Heart right ventricle (tissue), 16 donors: ENCODE measurements at regions of chr14 and their contacts with region 1.

Region 1: DNA sequence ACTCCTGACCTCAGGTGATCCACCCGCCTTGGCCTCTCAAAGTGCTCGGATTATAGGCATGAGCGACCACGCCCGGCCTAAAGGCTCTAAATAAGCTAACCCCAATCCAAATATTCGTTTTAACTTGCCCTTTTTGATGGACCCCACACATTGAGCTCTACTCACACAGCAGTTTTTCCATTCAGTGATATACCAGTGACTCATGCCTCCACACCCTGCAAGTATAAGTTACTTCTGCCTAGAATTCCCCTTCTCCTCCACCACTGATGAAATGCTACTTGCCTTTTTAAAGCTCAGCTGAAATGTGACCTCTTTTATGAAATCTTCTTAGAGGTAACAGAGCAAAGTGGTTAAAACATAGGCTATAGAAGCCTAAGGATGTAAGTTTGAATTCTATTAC is 68.8 kb downstream of the EXOC5 start:
- DNase-seq: no peak
- ATAC-seq: no peak
- H3K4me3 ChIP-seq: no peak overlapping the region
- H3K27ac ChIP-seq: no peak overlapping the region
- H3K4me1 ChIP-seq: no peaks in the 10 kb centered on the region
- H3K27me3 ChIP-seq: peaks cover 0 to 9% (median 0%) of the 10 kb centered on the region in 7 donors
- CTCF ChIP-seq: no peak

Region 2: GRCh38 chr14:56491299-56492285 is 708.3 kb before region 1 on chr14:
- intact Hi-C with region 1: loop called in 2 of 10 experiments (anchors 5 kb)
- DNase-seq: peak in 1 of 2 donors; percentile 25
- ATAC-seq: peak in 6 of 8 donors; percentile 35 to 57 (median 44)
- H3K4me3 ChIP-seq: no peak overlapping the region
- H3K27ac ChIP-seq: no peak overlapping the region
- H3K4me1 ChIP-seq: peaks cover 0 to 12% (median 0%) of the 10 kb centered on the region in 9 donors
- H3K27me3 ChIP-seq: no peaks in the 10 kb centered on the region
- CTCF ChIP-seq: peak; percentile 42 to 77 (median 71)

Region 3: GRCh38 chr14:56498112-56498511 is 701.8 kb before region 1 on chr14:
- intact Hi-C with region 1: loop called in 2 of 10 experiments (anchors 5 kb)
- DNase-seq: no peak
- ATAC-seq: no peak
- H3K4me3 ChIP-seq: no peak overlapping the region
- H3K27ac ChIP-seq: no peak overlapping the region
- H3K4me1 ChIP-seq: no peaks in the 10 kb centered on the region
- H3K27me3 ChIP-seq: no peaks in the 10 kb centered on the region
- CTCF ChIP-seq: no peak

Region 4: GRCh38 chr14:56686416-56686815 is 513.5 kb before region 1 on chr14:
- intact Hi-C with region 1: loop called in 2 of 10 experiments (anchors 5 to 10 kb)
- DNase-seq: peak; percentile 29 to 40
- ATAC-seq: peak; percentile 44 to 97 (median 75)
- H3K4me3 ChIP-seq: no peak overlapping the region
- H3K27ac ChIP-seq: no peak overlapping the region
- H3K4me1 ChIP-seq: peaks cover 0 to 5% (median 0%) of the 10 kb centered on the region in 9 donors
- H3K27me3 ChIP-seq: peaks cover 0 to under 1% (median 0%) of the 10 kb centered on the region in 7 donors
- CTCF ChIP-seq: peak in 7 of 9 donors; percentile 16 to 47 (median 26)

Region 5: DNA sequence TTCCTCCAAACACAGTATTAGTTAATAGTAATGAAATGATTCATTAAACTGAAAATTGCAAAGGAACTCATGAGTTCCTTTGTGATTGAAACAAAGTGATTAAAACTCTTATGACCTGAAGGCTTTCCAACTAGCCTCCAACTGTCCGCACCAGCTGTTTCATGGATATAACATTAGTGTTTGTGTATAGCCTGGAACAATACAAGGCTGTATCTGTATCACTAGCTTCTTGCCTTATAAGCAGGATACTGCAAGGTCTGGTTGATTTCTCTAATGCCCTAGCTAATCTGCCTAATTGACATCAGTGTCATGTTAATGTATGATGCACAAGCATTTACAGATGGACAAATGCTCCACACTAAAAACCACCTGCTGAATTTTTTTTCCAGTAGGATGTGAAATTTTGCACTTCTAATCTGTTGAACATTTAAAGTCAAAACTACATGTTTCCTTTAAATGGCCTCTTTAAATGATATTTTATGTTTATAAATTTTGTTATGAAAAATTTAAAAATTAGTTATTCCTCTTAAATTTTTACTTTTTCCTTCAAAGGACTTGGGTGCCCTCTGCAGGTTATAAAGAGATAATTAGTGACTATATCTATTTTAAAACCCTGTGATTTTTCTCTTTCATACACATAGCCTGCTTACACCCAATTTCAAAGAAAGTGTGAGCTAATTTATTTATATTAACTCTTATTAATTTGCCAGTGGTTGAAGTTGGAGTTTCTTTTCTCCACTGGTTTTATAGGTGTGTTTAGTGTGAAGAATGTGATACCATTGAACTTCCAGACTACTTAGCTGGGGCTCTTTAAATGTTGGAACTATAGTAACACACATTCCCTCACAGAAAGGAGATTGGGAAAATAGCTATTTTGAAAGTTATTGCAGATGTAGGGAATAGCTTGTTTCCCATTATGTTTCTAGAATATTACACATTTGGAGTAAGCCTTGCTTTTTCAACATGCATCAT is 94.2 kb after region 1 on chr14:
- intact Hi-C with region 1: loop called in 1 of 10 experiments (anchors 10 kb)
- DNase-seq: no peak
- ATAC-seq: no peak
- H3K4me3 ChIP-seq: no peak overlapping the region
- H3K27ac ChIP-seq: no peak overlapping the region
- H3K4me1 ChIP-seq: peaks cover 0 to 6% (median 0%) of the 10 kb centered on the region in 9 donors
- H3K27me3 ChIP-seq: no peaks in the 10 kb centered on the region
- CTCF ChIP-seq: peak in 7 of 9 donors; percentile 8 to 53 (median 41)